HepG2 (cell line): ENCODE measurements at regions of chr1 and their contacts with region 1.

Region 1: GRCh38 chr1:50929376-50929958 is 30.6 kb downstream of the FAF1 start:
- DNase-seq: peak; percentile 47
- ATAC-seq: no peak
- H3K4me3 ChIP-seq: no peak overlapping the region
- H3K27ac ChIP-seq: no peak overlapping the region
- H3K4me1 ChIP-seq: peaks cover 18% of the 10 kb centered on the region
- H3K27me3 ChIP-seq: no peaks in the 10 kb centered on the region
- CTCF ChIP-seq: peak; percentile 38
- EP300 ChIP-seq: no peak
- POLR2A ChIP-seq: no peak
- RAD21 ChIP-seq: no peak

Region 2: DNA sequence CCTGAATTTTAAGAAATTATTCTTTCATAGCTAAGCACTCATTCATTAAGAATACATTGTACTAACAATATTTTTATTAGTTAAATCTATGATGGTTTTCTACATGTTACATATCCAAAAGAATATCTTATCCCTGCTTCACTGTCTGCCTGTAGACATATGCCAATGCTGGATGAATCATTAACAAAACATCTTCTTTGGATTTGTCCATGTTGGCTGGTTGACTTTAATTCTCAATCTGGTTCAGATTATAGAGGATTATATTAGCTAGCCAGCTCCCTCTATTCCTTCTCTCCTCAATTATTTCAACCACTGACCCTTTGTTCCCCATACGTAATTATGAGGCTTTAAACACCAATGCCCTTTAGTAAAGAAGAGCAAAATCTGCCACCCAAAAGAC is 367.4 kb before region 1 on chr1:
- CTCF ChIA-PET with region 1: no interaction called
- POLR2A ChIA-PET with region 1: no interaction called
- in situ Hi-C with region 1: no loop called
- intact Hi-C with region 1: no loop called
- DNase-seq: no peak
- ATAC-seq: no peak
- H3K4me3 ChIP-seq: no peak overlapping the region
- H3K27ac ChIP-seq: no peak overlapping the region
- H3K4me1 ChIP-seq: no peaks in the 10 kb centered on the region
- H3K27me3 ChIP-seq: no peaks in the 10 kb centered on the region; a peak in 1 of 5 replicates
- CTCF ChIP-seq: no peak
- EP300 ChIP-seq: no peak
- POLR2A ChIP-seq: no peak
- RAD21 ChIP-seq: no peak

Region 3: GRCh38 chr1:50774759-50775351 is 154.6 kb before region 1 on chr1:
- CTCF ChIA-PET with region 1: interaction called, 7 read pairs
- POLR2A ChIA-PET with region 1: no interaction called
- in situ Hi-C with region 1: loop called (anchors 10 kb)
- intact Hi-C with region 1: loop called (anchors 5 kb)
- DNase-seq: peak; percentile 63
- ATAC-seq: peak; percentile 59; the same call in 1 of the 3 replicates
- H3K4me3 ChIP-seq: no peak overlapping the region
- H3K27ac ChIP-seq: no peak overlapping the region
- H3K4me1 ChIP-seq: peaks cover 14% of the 10 kb centered on the region
- H3K27me3 ChIP-seq: no peaks in the 10 kb centered on the region
- CTCF ChIP-seq: peak; percentile 76
- EP300 ChIP-seq: no peak
- POLR2A ChIP-seq: no peak
- RAD21 ChIP-seq: peak; percentile 56

Region 4: DNA sequence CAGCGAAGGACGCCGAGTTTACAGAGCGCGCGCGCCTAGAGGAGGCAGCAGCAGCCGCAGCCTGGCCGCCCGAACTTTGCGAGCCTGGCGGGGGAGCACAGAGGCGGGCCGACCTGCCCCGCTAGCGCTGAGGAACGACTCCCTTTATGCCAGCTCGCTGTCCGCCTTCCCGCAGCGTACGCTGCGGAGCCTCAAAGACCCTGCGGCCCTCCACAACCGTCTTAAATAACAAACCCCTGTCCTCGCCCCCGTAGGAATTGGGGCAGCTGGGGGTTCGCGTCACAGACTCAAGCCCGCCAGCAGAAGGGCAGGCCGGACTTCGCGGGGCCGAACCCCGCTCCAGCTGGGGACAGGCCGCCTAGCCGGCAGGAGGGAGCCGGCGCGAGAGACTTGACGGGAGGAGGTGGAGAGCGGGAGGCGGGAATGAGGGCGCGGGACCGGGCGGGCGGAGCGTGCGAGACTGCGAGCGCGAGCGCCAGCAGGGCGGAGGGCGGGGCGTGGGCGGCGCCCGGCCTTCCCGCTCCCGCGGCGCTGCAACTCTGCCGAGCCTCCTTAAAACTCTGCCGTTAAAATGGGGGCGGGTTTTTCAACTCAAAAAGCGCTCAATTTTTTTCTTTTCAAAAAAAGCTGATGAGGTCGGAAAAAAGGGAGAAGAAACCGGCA is 38.8 kb after region 1 on chr1:
- CTCF ChIA-PET with region 1: interaction called, 4 read pairs
- POLR2A ChIA-PET with region 1: no interaction called
- in situ Hi-C with region 1: no loop called
- intact Hi-C with region 1: loop called (anchors 2 kb)
- DNase-seq: peak; percentile 76
- ATAC-seq: peak; percentile 89
- H3K4me3 ChIP-seq: peak overlapping the region; percentile 91 to 99 (median 98)
- H3K27ac ChIP-seq: peak overlapping the region; percentile 98
- H3K4me1 ChIP-seq: peaks cover 17% of the 10 kb centered on the region; the same call in 1 of the 2 replicates
- H3K27me3 ChIP-seq: no peaks in the 10 kb centered on the region; a peak in 1 of 5 replicates
- CTCF ChIP-seq: peak; percentile 73
- EP300 ChIP-seq: peak in 1 of 2 experiments; percentile 69; a peak in 2 of 4 replicates
- POLR2A ChIP-seq: peak; percentile 62 to 75
- RAD21 ChIP-seq: peak; percentile 64

Region 5: GRCh38 chr1:51000160-51000559 is 70.7 kb after region 1 on chr1:
- CTCF ChIA-PET with region 1: no interaction called
- POLR2A ChIA-PET with region 1: no interaction called
- in situ Hi-C with region 1: no loop called
- intact Hi-C with region 1: no loop called
- DNase-seq: no peak
- ATAC-seq: no peak
- H3K4me3 ChIP-seq: no peak overlapping the region
- H3K27ac ChIP-seq: no peak overlapping the region
- H3K4me1 ChIP-seq: peaks cover under 1% of the 10 kb centered on the region; the same call in 1 of the 2 replicates
- H3K27me3 ChIP-seq: no peaks in the 10 kb centered on the region
- CTCF ChIP-seq: no peak
- EP300 ChIP-seq: no peak
- POLR2A ChIP-seq: no peak
- RAD21 ChIP-seq: no peak

Region 6: DNA sequence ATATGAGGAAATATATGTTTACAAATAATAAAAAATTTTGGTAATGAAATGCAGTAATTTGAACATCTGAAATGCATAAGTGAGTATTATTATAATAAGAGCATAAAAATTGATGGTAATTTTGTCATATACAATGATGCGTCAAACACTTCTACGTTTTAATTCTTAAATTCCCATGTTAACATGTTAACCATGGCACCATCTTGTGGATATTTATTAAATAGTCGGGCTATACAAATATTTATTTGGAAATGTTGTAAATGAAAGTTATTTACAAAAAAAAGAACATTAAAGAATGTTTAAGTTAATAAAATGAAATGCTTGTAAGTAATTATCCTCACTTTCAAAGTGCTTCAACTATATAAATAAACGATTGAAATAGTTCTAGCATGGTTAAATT is 115.4 kb after region 1 on chr1:
- CTCF ChIA-PET with region 1: interaction called, 3 read pairs
- POLR2A ChIA-PET with region 1: no interaction called
- in situ Hi-C with region 1: no loop called
- intact Hi-C with region 1: loop called (anchors 1 kb)
- DNase-seq: no peak
- ATAC-seq: no peak
- H3K4me3 ChIP-seq: no peak overlapping the region
- H3K27ac ChIP-seq: no peak overlapping the region
- H3K4me1 ChIP-seq: 0 out of 2 replicates have a peak, but pooled peaks cover 7% of the 10 kb centered on the region
- H3K27me3 ChIP-seq: no peaks in the 10 kb centered on the region
- CTCF ChIP-seq: no peak
- EP300 ChIP-seq: no peak
- POLR2A ChIP-seq: no peak
- RAD21 ChIP-seq: no peak